Adrenal gland (tissue), 19 donors: ENCODE measurements at regions of chr11 and their contacts with region 1.

Region 1: GRCh38 chr11:114354076-114354475 is 46.2 kb downstream of the C11orf71 start:
- DNase-seq: peak in 1 of 7 donors; percentile 3
- H3K4me3 ChIP-seq: no peak overlapping the region
- H3K27ac ChIP-seq: no peak overlapping the region
- H3K4me1 ChIP-seq: no peaks in the 10 kb centered on the region
- H3K27me3 ChIP-seq: no peaks in the 10 kb centered on the region
- CTCF ChIP-seq: no peak
- POLR2A ChIP-seq: no peak

Region 2: GRCh38 chr11:114439229-114440120 is 85.4 kb after region 1 on chr11 and contains the start of gene REXO2:
- intact Hi-C with region 1: loop called in 1 of 2 experiments (anchors 10 kb)
- DNase-seq: peak; percentile 94 to 98 (median 97)
- H3K4me3 ChIP-seq: peak within 1 kb of the TSS; percentile 20 to 100 (median 96)
- H3K27ac ChIP-seq: peak within 1 kb of the TSS; percentile 71 to 92 (median 86)
- H3K4me1 ChIP-seq: peaks cover 17 to 18% of the 10 kb centered on the region in 2 donors
- H3K27me3 ChIP-seq: no peaks in the 10 kb centered on the region
- CTCF ChIP-seq: peak in 4 of 6 experiments; percentile 7 to 29 (median 16)
- POLR2A ChIP-seq: peak; percentile 27 to 91
- total RNA-seq, gene REXO2: 76.6 to 211 (median 107) TPM